ENCODE measurements at regions of chr17 and their contacts with region 1.

Region 1: DNA sequence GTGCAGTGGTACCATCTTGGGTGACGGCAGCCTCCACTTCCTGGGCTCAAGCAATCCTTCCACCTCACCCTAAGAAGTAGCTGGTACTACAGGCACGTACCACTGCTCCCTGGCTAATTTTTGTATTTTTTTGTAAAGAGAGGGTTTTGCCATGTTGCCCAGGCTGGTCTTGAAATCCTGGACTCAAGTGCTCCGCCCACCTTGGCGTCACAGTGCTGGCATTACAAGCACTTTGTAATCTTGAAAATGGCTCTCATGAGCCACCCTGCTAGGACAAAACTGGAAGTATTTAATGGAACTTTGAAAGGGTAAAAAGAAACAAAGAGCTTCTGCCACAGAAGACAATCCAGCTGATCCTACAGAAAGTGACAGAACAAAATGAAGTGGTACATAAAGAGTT is 9.2 kb downstream of the SUMO2 start:
- DNase-seq: peak; percentile 14
- H3K4me3 ChIP-seq: no peak overlapping the region
- H3K27ac ChIP-seq: no peak overlapping the region
- H3K4me1 ChIP-seq: peaks cover 9 to 90% (median 36%) of the 10 kb centered on the region in 6 donors
- H3K27me3 ChIP-seq: no peaks in the 10 kb centered on the region
- CTCF ChIP-seq: no peak
- POLR2A ChIP-seq: no peak

Region 2: GRCh38 chr17:75077496-75078283 is 95.8 kb before region 1 on chr17:
- intact Hi-C with region 1: no loop called
- DNase-seq: peak; percentile 95
- H3K4me3 ChIP-seq: peak overlapping the region; percentile 14 to 68 (median 39)
- H3K27ac ChIP-seq: peak overlapping the region; percentile 40 to 83 (median 72)
- H3K4me1 ChIP-seq: peaks cover 27 to 77% (median 43%) of the 10 kb centered on the region in 6 donors
- H3K27me3 ChIP-seq: no peaks in the 10 kb centered on the region
- CTCF ChIP-seq: peak in 6 of 11 experiments; percentile 24 to 38 (median 32)
- POLR2A ChIP-seq: no peak

Region 3: DNA sequence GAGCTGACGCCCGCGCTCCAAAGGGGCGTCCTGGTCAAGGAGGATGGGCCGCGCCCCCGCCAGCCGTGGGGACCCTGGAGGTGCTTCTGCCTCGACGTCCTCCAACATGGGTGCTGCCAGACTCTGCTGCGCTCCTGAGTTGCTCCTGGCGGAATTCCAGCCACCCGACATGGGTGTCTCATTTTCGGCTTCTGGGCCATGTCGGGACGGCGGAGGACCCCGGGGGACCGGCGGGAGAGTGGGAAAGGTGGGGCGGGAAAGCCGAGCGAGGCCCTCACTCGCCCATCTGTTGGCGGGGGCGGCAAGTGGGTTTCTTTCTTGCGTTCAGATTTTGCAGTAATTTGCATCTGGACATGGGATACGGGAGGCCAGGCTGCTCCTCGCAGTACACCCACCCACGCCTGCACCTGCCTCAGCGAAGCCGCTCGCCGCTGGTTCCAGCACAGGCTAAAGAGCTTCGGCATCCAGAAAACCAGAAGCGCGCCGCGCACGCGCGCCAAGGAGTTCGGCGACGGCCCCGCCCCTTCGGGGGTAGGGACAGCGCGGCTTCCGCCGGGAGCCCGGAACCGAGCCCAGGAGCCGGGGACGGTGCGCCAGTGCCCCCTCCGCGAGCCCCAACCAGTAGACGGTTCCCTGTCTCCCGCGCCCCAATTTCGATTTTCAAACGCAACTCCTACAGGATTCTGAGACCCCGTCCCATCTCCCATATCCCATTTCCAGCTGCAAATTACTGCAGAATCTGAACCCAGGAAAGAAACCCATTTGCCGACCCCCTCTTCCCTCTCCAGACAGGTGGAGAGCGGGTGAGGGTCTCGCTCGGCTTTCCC is 63.9 kb before region 1 on chr17 and contains the start of gene ARMC7:
- intact Hi-C with region 1: loop called (anchors 10 kb)
- DNase-seq: peak; percentile 98
- H3K4me3 ChIP-seq: peak within 1 kb of the TSS; percentile 55 to 90 (median 77)
- H3K27ac ChIP-seq: peak within 1 kb of the TSS; percentile 77 to 91 (median 84)
- H3K4me1 ChIP-seq: peaks cover 25 to 68% (median 41%) of the 10 kb centered on the region in 6 donors
- H3K27me3 ChIP-seq: no peaks in the 10 kb centered on the region
- CTCF ChIP-seq: peak in 1 of 11 experiments; percentile 7
- POLR2A ChIP-seq: peak in 1 of 3 donors; percentile 81
- total RNA-seq, gene ARMC7: 10.5 to 19.2 (median 14.7) TPM

Region 4: DNA sequence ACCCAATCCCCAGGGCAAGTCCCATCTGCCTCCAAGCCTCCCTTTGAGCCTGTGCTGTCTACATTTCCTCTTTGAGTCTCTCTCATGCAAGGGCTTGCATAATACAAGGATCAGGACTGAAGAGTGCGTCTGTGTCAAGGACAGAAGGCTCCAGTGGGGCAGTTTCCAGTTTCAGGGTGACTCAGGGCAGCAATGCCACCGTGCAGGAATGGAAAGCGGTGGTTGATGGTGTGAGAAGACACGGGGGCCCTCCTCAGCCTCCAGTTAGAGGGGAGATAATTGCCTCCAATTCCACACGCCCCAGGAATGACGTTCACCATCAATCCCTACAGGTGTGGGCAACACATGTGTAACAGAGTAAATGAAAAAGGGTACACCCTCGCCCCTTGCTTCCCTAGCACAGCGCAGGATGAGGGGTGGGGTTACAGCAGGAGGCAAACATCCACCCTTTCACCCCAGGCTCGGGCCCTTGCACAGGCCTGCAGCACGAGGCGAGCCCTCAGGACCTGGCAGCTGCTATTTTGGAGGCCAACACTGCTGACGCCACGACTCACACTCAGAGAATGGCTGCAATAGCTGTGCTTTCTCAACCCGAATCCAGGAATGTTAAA is 140.5 kb after region 1 on chr17:
- intact Hi-C with region 1: no loop called
- DNase-seq: no peak
- H3K4me3 ChIP-seq: no peak overlapping the region
- H3K27ac ChIP-seq: peak overlapping the region; percentile 46 to 90 (median 83)
- H3K4me1 ChIP-seq: peaks cover 3 to 100% (median 78%) of the 10 kb centered on the region in 6 donors
- H3K27me3 ChIP-seq: no peaks in the 10 kb centered on the region
- CTCF ChIP-seq: no peak
- POLR2A ChIP-seq: no peak

Region 5: DNA sequence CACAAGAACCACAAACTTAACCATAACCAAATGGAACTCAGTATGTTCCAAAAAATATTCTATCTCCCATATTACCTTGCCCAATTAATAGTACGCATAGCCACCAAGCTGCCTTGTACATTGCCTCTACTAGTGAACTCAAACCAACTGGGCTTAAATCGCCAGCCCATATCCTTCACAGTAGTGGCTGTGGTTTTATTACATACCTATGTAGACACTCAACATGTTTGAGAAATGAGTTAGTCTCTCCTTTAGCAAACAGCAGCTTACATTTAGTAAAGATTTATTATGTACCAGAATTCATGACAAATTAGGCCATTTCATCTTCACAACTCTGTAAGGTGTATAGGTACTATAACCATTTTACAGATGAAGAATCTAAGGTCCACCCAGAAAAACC is 190.6 kb after region 1 on chr17:
- intact Hi-C with region 1: no loop called
- DNase-seq: no peak
- H3K4me3 ChIP-seq: no peak overlapping the region
- H3K27ac ChIP-seq: no peak overlapping the region
- H3K4me1 ChIP-seq: peaks cover 46 to 100% (median 92%) of the 10 kb centered on the region in 6 donors
- H3K27me3 ChIP-seq: no peaks in the 10 kb centered on the region
- CTCF ChIP-seq: no peak
- POLR2A ChIP-seq: no peak

Measured in spleen (tissue), 13 donors.